Astrocyte of the cerebellum (primary cell): ENCODE measurements at regions of chr1 and their contacts with region 1.

Region 1: DNA sequence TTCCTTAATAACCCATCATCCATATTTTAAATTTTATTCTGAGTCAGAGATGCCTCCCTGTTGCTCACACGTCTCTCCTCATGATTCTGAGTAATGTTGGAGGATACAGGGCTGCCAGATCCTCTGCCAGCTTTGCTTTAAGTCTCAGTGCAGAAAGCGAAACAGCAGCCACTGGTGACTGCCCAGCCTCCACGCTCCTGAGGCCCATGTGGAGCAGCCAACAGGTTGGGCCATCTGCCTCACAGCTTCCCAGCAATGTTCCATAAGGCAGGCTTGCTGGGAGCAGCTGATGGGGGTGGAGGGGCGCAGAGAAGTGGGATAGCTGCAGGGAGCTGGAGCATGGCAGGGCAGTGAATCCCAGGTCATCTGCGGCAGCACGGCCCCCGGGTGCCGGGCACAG is 104.2 kb downstream of the IGSF21 start:
- DNase-seq: no peak
- H3K4me3 ChIP-seq: no peak overlapping the region
- CTCF ChIP-seq: no peak

Region 2: GRCh38 chr1:17849216-17849615 is 362.5 kb before region 1 on chr1:
- in situ Hi-C with region 1: no loop called
- DNase-seq: no peak
- H3K4me3 ChIP-seq: no peak overlapping the region
- CTCF ChIP-seq: peak; percentile 41

Region 3: DNA sequence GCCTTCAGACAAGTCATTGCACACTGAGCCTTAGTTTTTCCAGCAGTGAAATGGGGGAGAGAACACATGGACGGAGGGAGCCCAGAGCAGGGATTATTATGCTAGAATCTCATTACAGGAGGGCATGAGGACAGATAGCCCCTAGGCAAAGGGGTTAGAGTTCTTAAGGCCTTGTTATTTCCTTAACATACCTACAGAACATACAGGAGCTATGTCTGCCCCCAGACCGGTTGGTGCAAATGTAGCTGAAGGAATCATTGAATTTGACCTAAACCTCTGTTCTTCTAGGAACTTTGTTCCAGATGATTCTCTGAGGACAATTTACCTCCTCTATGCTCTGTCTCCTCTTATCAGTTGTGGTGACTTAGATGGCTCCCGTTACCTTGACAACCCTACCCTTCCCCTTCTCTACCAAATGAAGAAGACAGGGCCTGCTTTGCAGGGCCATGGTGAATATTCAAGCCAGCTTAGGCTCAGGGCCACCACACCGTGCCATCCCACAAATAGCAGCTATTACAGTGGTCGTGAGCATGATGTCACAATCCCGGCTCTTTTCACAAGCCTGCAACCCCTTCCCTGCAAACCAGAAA is 52.8 kb after region 1 on chr1:
- in situ Hi-C with region 1: loop called (anchors 5 kb)
- DNase-seq: no peak
- H3K4me3 ChIP-seq: no peak overlapping the region
- CTCF ChIP-seq: no peak